Activated CD4-positive, alpha-beta memory T cell treated with anti-CD3 and anti-CD28 coated beads, Interleukin-2, amount 10 ng/mL, durations not matched to agents 7 days and 5 days (primary cell): ENCODE measurements at regions of chr17 and their contacts with region 1.

Region 1: GRCh38 chr17:61904094-61904710 is 23.6 kb downstream of the INTS2 start:
- DNase-seq: peak; percentile 63
- H3K4me3 Mint-ChIP-seq: peak overlapping the region; percentile 70
- H3K27ac Mint-ChIP-seq: peak overlapping the region; percentile 85
- H3K4me1 Mint-ChIP-seq: peaks cover 6% of the 10 kb centered on the region
- H3K27me3 Mint-ChIP-seq: no peaks in the 10 kb centered on the region

Region 2: DNA sequence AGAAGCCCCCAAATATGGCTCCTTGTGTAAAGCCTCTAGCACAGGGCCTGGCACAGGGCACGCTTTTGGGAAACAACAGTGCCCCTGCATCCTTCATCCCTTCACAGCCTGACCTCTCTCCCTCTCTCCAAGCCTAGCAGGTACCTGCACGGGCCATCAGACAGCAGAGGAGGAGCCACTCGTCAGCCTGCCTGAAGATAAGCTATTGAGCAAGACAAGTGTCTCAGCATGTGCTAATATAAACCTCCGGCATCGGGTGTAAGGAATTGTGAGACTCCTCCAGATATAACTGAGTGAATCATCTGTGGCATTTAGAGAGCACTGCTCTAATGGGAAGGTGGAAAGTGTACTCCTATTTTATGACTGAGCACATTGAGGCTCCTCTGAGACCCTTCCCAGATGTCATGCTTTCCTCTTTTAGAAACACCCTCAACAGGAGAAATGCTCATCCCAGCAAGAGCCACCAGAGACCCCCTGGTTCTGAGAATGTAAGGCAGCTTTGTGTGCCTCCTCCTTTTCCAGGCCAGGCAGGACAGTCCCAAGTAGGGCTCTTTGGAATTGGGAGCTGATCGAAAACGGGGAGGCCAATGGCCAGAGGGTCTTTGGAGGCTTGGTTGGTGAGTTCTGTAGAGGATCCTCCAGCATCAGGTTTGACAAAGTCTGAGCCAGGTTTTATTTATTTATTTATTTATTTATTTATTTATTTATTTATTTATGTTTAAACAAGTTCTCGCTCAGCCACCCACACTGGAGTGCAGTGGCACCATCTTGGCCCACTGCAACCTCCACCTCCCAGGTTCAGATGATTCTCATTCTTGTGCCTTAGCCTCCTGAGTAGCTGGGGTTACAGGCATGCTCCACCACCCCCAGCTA is 413.4 kb before region 1 on chr17:
- CTCF ChIA-PET with region 1: no interaction called
- POLR2A ChIA-PET with region 1: no interaction called
- DNase-seq: no peak
- H3K4me3 Mint-ChIP-seq: no peak overlapping the region
- H3K27ac Mint-ChIP-seq: no peak overlapping the region
- H3K4me1 Mint-ChIP-seq: peaks cover 4% of the 10 kb centered on the region
- H3K27me3 Mint-ChIP-seq: peaks cover 4% of the 10 kb centered on the region

Region 3: DNA sequence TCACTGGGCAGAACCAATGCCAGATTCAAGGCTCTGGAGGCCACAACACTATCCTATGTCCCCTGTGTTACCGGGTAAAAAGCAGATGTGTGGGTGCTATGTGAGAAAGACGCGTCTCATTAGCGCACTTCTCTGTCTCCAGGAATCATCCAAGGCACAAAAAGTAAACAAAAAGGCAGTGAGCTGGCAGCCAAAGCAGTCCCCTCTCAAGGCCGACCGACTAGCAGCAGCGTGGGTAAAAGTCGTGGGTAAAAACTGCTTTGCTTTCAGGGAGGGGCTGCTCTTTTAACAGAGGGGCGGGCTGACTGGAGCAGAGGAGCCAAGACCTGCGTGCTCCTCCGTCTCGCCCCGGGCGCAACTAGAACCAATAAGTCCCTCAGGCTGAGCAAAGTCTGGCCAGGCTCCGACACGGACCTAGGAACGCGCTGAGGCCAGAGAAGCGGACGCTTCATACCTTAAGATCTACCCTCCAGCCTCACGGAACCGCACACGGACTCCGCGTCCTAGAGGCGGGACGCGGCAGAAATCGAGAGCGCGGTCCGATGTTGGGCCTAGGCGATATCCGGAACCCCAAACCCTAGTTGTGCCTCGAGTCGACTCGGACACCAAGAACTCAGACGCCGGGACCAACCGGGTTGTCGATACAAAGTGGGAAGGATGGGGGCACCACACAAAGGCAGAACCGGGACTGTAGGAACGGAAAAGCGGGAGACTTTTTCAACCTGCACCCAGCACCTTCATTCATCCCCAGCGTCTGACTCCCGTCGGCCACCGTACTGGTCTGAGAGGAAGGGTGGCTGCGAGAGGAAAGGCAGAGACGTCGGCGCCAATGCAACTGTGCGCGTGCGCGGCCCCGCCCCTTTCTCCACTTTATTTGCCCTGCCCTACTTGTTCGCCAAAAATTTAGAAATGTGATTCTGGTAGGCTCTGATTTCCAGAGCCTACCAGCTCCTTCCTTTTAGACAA is 23.3 kb after region 1 on chr17 and contains the start of gene INTS2:
- CTCF ChIA-PET with region 1: no interaction called
- POLR2A ChIA-PET with region 1: interaction called, 17 read pairs
- DNase-seq: peak; percentile 96
- H3K4me3 Mint-ChIP-seq: peak within 1 kb of the TSS; percentile 83
- H3K27ac Mint-ChIP-seq: peak within 1 kb of the TSS; percentile 84
- H3K4me1 Mint-ChIP-seq: peaks cover 18% of the 10 kb centered on the region
- H3K27me3 Mint-ChIP-seq: peaks cover 3% of the 10 kb centered on the region
- total RNA-seq, gene INTS2: 24.3 to 25.0 TPM